Left colon (tissue), 2 donors: ENCODE measurements at regions of chr2 and their contacts with region 1.

Region 1: DNA sequence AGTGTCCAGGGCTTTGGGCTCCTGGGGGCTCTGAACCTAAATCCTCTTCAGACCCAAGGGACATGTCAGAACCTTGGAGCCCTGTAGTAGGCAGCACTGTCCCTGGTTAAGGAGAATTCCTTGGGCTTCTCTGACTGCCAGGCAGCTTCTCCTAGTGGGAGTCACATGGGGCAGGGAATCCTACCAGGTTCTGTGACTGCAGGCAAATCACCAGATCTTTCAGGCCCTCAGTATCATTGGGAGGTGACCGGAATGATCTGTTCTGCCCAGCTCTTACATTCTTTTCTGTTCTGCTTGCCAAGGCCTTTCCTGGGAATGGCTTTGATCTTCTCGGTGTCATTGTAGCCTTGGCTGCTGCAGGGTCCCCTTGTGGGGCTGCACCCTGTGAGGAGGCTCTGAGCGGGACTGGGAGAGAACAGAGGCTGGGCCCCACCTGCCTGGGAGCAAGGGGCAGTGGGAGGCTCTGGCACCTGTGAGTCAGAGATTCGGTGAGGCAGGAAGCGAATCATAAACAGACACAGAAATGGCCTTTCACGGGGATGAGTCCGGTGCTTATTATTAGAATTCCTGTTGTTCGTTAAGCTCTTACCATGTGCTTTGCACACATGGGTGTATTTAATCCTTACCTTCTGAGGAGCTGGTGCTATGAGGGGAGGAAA is 14.1 kb downstream of the CEP68 start:
- DNase-seq: peak in 1 of 2 donors; percentile 60
- ATAC-seq: peak; percentile 75

Region 2: DNA sequence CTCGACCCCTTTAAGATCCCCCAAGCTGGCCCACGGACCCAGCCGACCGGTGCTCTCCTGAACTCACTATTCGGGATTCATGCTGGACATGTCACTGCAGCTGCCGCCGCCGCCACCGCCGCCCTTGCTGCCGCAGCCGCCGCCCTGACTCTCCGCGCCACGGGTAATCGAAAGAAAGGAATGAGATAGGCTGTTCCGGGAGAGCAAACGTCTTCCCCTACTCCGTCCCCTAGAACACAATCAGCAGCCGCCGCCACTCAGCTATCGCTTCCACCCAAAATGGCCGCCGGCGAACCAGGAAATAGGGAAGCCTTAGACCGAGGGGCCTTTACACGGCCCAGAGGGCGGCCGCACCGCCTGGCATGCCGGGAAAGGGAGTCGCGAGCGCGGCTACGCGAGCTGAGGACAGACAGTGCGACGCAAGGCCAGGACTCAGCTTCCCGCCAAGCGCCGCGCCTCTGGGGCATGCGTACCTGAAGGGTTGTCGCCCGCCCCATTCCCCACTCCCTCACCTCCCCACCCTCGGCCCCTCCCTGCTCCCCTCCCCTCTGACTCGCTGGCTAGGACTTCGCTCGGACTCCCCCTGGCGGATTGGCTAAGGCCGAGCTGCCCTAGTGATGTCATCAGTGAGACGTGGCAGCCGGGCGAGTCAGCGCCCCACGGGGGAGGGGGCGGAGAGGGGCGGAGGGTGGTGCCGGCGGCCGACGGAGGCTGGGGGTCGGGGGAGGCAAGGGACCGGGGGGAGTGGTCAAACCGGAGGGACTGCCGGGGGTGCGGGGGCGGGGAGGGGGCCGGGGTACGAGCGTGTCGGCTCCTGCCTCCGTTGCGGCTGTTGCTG is 59.7 kb after region 1 on chr2 and contains the start of gene RAB1A:
- intact Hi-C with region 1: loop called in 1 of 2 experiments (anchors 10 kb)
- DNase-seq: peak; percentile 99 to 100
- ATAC-seq: peak; percentile 89
- total RNA-seq, gene RAB1A: 172 to 179 TPM

Region 3: GRCh38 chr2:65153514-65153913 is 83.2 kb after region 1 on chr2:
- intact Hi-C with region 1: no loop called
- DNase-seq: no peak
- ATAC-seq: no peak